Naive thymus-derived CD8-positive, alpha-beta T cell (primary cell): ENCODE measurements at regions of chr1 and their contacts with region 1.

Region 1: DNA sequence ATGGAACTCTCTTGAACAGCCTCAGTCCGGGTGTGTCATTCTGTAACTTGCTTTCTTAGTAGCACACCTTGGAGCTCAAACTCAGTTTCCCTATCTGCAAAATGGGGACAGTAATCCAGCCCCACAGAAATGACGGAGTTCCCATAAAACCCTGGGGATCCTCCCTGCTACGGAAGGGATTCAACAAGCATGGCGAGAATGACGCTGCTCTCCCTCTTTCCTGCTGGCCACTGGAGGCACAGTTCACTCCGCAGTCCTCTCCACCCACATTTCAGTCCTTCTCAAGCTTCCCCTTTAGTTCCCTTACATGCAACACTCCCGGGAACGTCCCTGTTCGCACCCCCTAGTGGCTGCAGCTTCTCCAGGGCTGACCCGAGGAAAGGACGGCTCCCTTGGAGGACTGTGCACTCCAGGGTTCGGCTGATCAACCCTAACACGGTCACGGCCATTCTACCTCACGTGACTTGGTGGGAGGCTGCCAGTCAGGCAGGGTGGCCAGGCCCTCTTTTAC is 20.6 kb downstream of the RUNX3 start:
- DNase-seq: no peak
- ATAC-seq: no peak
- H3K4me3 Mint-ChIP-seq: peak overlapping the region in 8 of 10 donors; percentile 16 to 78 (median 44)
- H3K27ac Mint-ChIP-seq: peak overlapping the region; percentile 96 to 100 (median 99)
- H3K4me1 Mint-ChIP-seq: peaks cover 28 to 81% (median 69%) of the 10 kb centered on the region in 4 donors
- H3K27me3 Mint-ChIP-seq: no peaks in the 10 kb centered on the region

Region 2: DNA sequence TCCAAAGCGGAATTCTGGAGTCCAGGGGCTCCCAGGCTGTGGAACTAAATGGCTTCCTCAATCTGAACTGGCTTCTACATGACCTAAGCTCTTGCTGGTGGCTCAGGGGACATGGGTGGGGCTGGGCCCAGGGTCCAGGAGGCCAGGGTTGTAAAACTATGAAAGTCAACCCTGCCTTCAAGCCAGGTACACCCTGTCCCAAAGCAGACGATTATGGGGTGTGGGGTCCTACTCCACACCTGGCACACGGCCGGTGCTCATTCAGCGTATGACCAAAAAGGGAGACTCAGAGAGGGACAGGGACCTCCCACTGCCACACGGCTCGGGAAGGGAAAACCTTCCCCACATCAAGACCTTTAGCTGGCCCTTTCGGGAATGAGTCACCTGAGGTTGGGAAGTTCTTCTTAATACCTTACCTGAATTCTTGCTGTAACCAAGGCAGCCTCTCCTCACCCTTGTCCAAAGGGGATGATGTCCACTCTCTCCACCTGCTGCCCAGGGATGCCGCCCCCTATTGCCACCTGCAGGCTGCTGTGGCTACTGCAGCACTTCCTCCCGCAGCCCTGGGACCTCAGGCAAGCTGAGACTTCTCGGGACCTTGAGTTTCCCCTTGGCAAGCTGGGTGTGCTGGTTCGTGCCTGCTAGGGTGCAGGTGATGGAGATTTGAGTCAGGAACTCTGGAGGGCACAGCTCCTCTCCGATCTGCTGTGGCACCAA is 11.5 kb before region 1 on chr1:
- POLR2A ChIA-PET with region 1: interaction called, 14 read pairs
- DNase-seq: peak in 5 of 10 donors; percentile 37 to 50 (median 39)
- ATAC-seq: peak; percentile 67 to 68
- H3K4me3 Mint-ChIP-seq: peak overlapping the region in 5 of 10 donors; percentile 24 to 59 (median 43)
- H3K27ac Mint-ChIP-seq: peak overlapping the region; percentile 60 to 94 (median 83)
- H3K4me1 Mint-ChIP-seq: peaks cover 20 to 52% (median 49%) of the 10 kb centered on the region in 4 donors
- H3K27me3 Mint-ChIP-seq: no peaks in the 10 kb centered on the region

Region 3: DNA sequence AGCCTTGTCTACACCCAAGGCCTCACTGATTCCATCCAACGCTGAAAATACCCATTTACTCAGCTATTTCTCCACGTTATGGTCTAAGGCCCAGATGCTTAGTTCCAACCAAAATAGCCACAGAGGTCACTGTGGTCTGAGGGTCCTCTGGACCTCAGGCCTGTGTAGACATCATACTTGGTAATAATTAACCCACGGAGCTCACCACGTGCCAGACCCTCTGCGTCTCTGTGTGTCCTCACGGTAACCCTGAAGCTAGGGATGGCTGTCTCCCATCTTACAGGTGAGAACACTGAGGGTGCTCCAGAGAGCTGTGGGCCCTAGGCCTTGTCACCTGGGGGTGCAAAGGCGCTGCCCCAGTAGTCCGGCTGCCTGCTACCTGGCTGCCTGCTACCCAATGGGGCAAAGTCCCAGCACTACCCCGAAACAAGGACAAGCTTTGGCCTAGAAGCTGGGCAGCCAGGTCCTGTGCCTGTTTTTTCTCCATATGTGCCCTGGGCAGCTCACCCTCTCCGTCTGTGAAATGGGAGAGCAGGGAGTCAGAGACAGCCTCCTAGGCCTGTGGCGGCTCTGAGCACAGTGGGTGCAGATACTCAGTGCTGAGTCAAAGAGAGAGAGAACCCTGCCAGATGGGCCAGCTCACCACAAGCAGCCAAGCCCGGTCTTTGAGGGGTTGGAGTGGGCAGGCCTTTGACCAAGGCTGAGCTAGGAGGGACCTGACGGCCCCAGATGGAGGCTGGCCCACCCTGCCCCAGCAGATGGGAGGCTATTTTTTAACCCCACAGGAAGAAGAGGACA is 37.6 kb after region 1 on chr1:
- POLR2A ChIA-PET with region 1: no interaction called
- DNase-seq: no peak
- ATAC-seq: no peak
- H3K4me3 Mint-ChIP-seq: peak overlapping the region in 1 of 10 donors; percentile 18
- H3K27ac Mint-ChIP-seq: peak overlapping the region in 8 of 10 donors; percentile 18 to 81 (median 69)
- H3K4me1 Mint-ChIP-seq: peaks cover 36 to 79% (median 60%) of the 10 kb centered on the region in 4 donors
- H3K27me3 Mint-ChIP-seq: peaks cover 0 to 2% (median 0%) of the 10 kb centered on the region in 5 donors

Region 4: DNA sequence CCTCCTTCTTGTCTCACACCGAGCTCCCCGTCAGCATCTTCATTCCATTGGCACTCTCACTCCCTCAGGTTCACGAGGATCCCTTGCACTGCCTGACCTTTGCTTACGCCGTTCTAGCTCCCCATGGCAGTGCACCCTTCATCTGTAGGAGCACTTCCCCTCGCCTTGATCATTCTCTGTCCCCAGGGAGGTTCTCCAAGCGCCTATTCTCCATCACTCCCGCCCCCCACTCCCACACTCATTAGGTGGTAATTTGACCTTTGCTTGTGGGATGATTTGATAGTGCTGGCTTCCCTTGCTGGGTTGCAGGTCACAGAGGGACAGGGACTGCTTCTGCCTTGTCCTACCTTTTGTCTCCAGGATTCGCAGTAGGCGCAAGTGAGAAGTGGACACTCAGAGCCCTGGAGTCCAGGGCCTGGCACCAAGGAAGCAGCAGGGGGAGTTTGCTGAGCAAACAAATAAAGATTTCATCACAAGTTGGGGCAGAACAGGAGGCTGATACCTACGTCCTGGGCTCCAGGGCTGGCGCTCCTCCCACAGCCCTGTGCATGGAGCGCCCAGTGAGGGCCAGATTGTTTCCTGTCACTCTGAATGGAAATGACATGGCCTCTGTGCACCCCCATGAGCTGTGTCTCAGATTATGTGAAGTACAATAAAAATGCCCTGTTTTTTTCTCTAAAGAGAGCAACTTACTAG is 102.6 kb after region 1 on chr1:
- POLR2A ChIA-PET with region 1: no interaction called
- DNase-seq: peak in 2 of 10 donors; percentile 45 to 47
- ATAC-seq: peak; percentile 75 to 89
- H3K4me3 Mint-ChIP-seq: peak overlapping the region in 6 of 10 donors; percentile 40 to 69 (median 55)
- H3K27ac Mint-ChIP-seq: peak overlapping the region; percentile 46 to 93 (median 80)
- H3K4me1 Mint-ChIP-seq: peaks cover 21 to 68% (median 59%) of the 10 kb centered on the region in 4 donors
- H3K27me3 Mint-ChIP-seq: no peaks in the 10 kb centered on the region